CD4-positive, alpha-beta T cell (primary cell): ENCODE measurements at regions of chr20 and their contacts with region 1.

Region 1: GRCh38 chr20:32031007-32031958 is 20.8 kb upstream of the HCK start:
- DNase-seq: peak; percentile 31 to 77 (median 50)
- ATAC-seq: peak; percentile 76
- H3K4me3 ChIP-seq: peak overlapping the region; percentile 31
- H3K4me3 Mint-ChIP-seq: peak overlapping the region; percentile 36
- H3K27ac ChIP-seq: no peak overlapping the region
- H3K27ac Mint-ChIP-seq: no peak overlapping the region
- H3K4me1 ChIP-seq: peaks cover 15% of the 10 kb centered on the region
- H3K4me1 Mint-ChIP-seq: no peaks in the 10 kb centered on the region
- H3K27me3 ChIP-seq: peaks cover 11 to 23% of the 10 kb centered on the region in 2 experiments
- H3K27me3 Mint-ChIP-seq: peaks cover 68% of the 10 kb centered on the region
- CTCF ChIP-seq: peak; percentile 100

Region 2: GRCh38 chr20:31822421-31823330 is 208.6 kb before region 1 on chr20:
- CTCF ChIA-PET with region 1: no interaction called
- POLR2A ChIA-PET with region 1: no interaction called
- intact Hi-C with region 1: loop called (anchors 1 to 2 kb)
- DNase-seq: peak; percentile 60 to 86 (median 68)
- ATAC-seq: peak; percentile 86
- H3K4me3 ChIP-seq: peak overlapping the region; percentile 5
- H3K4me3 Mint-ChIP-seq: no peak overlapping the region
- H3K27ac ChIP-seq: no peak overlapping the region
- H3K27ac Mint-ChIP-seq: no peak overlapping the region
- H3K4me1 ChIP-seq: peaks cover 10% of the 10 kb centered on the region
- H3K4me1 Mint-ChIP-seq: no peaks in the 10 kb centered on the region
- H3K27me3 ChIP-seq: peaks cover 0 to 3% of the 10 kb centered on the region in 2 experiments
- H3K27me3 Mint-ChIP-seq: no peaks in the 10 kb centered on the region
- CTCF ChIP-seq: peak; percentile 99

Region 3: DNA sequence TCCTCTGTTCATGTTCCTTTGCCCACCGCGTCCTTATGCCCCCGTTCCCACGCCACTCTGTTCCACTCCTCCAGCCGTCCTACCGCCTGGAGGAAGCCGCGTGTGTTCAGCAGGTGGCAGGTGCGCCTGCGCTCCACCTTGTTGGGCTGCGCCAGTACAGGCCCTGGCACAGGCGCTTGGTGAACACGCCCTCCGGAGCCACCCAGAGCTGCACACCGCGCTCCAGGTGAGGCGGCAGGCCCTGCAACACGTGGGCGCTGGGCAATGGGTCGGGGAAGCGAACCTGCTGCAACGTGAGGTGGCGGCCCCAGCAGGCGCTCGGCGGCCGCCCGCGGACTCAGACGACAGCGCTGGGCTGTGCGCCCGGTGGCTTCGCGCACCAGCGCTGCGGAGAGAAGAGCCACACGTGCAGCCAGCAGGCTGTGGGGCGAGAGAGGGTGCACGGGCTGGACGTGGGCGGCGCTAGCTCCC is 181.8 kb before region 1 on chr20:
- CTCF ChIA-PET with region 1: interaction called, 4 read pairs
- POLR2A ChIA-PET with region 1: no interaction called
- intact Hi-C with region 1: loop called in 1 of 2 experiments (anchors 2 kb)
- DNase-seq: no peak
- ATAC-seq: no peak
- H3K4me3 ChIP-seq: no peak overlapping the region
- H3K4me3 Mint-ChIP-seq: no peak overlapping the region
- H3K27ac ChIP-seq: no peak overlapping the region
- H3K27ac Mint-ChIP-seq: no peak overlapping the region
- H3K4me1 ChIP-seq: peaks cover 7% of the 10 kb centered on the region
- H3K4me1 Mint-ChIP-seq: no peaks in the 10 kb centered on the region
- H3K27me3 ChIP-seq: peaks cover 8 to 14% of the 10 kb centered on the region in 2 experiments
- H3K27me3 Mint-ChIP-seq: peaks cover 32% of the 10 kb centered on the region
- CTCF ChIP-seq: no peak

Region 4: GRCh38 chr20:32018269-32019074 is 12.8 kb before region 1 on chr20:
- CTCF ChIA-PET with region 1: interaction called, 10 read pairs
- POLR2A ChIA-PET with region 1: no interaction called
- intact Hi-C with region 1: no loop called
- DNase-seq: peak; percentile 12 to 65 (median 34)
- ATAC-seq: peak; percentile 47
- H3K4me3 ChIP-seq: peak overlapping the region; percentile 54
- H3K4me3 Mint-ChIP-seq: peak overlapping the region; percentile 84
- H3K27ac ChIP-seq: no peak overlapping the region
- H3K27ac Mint-ChIP-seq: no peak overlapping the region
- H3K4me1 ChIP-seq: peaks cover 22% of the 10 kb centered on the region
- H3K4me1 Mint-ChIP-seq: peaks cover 25% of the 10 kb centered on the region
- H3K27me3 ChIP-seq: peaks cover 32 to 67% of the 10 kb centered on the region in 2 experiments
- H3K27me3 Mint-ChIP-seq: peaks cover 81% of the 10 kb centered on the region
- CTCF ChIP-seq: peak; percentile 11

Region 5: GRCh38 chr20:32521780-32522525 is 490.7 kb after region 1 on chr20:
- CTCF ChIA-PET with region 1: no interaction called
- POLR2A ChIA-PET with region 1: no interaction called
- intact Hi-C with region 1: loop called in 1 of 2 experiments (anchors 5 kb)
- DNase-seq: peak; percentile 52 to 86 (median 65)
- ATAC-seq: peak; percentile 85
- H3K4me3 ChIP-seq: peak overlapping the region; percentile 5
- H3K4me3 Mint-ChIP-seq: peak overlapping the region; percentile 35
- H3K27ac ChIP-seq: peak overlapping the region; percentile 55 to 69
- H3K27ac Mint-ChIP-seq: peak overlapping the region; percentile 99
- H3K4me1 ChIP-seq: peaks cover 72% of the 10 kb centered on the region
- H3K4me1 Mint-ChIP-seq: peaks cover 61% of the 10 kb centered on the region
- H3K27me3 ChIP-seq: no peaks in the 10 kb centered on the region
- H3K27me3 Mint-ChIP-seq: no peaks in the 10 kb centered on the region
- CTCF ChIP-seq: peak; percentile 85